Head of caudate nucleus (tissue), 42 donors: ENCODE measurements at regions of chr19 and their contacts with region 1.

Region 1: GRCh38 chr19:12913851-12914690 is 5.0 kb downstream of the SYCE2 start:
- DNase-seq: peak in 23 of 42 donors; percentile 4 to 66 (median 32)

Region 2: GRCh38 chr19:12945479-12946091 is 31.5 kb after region 1 on chr19 and contains the start of gene RAD23A:
- intact Hi-C with region 1: loop called (anchors 1 kb)
- DNase-seq: peak; percentile 84 to 97 (median 92)